Activated CD4-positive, alpha-beta T cell treated with anti-CD3 and anti-CD28 coated beads for 36 hours (primary cell): ENCODE measurements at regions of chr16 and their contacts with region 1.

Region 1: DNA sequence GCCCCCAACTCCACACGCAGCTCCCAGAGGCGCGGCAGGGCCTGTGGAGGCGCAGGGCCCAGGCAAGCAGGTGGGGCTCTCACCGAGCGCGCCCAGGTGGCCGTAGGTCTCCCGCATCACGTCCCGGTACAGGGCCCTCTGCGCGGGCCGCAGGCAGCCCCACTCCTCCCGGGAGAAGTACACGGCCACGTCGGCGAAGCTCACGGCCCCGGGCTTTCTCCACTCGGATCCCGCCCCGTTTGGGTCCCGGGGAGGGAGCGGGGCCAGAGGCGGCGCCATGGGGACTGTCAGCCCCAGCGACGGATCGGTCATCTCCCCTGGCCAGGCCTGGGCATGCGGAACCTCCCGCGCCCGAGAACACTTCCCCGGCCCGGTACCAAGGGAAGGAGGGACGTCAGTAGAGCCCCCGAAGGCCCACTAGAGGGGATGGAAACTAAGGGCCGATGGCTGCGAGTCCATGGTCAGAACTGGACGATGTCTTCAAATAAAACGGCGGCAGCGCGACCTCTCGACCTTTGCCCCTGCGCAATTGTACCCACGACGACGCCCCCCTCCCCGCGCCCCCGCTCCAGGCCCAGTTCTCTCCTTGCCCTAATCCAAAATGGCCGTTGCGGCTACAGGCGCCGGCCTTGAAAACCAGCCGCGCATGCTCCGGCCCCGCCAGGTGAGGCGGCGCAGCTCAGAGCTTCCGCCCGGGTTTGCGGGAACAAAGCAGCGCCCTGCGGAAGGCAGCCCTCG is at the start of gene ZNF747:
- DNase-seq: peak; percentile 95
- ATAC-seq: peak; percentile 80
- H3K4me3 Mint-ChIP-seq: peak within 1 kb of the TSS; percentile 91
- H3K27ac Mint-ChIP-seq: peak within 1 kb of the TSS; percentile 100
- H3K4me1 Mint-ChIP-seq: peaks cover 44% of the 10 kb centered on the region
- H3K27me3 Mint-ChIP-seq: no peaks in the 10 kb centered on the region
- total RNA-seq, gene ZNF747: 6.3 to 8.0 TPM

Region 2: GRCh38 chr16:30417529-30418349 is 116.8 kb before region 1 on chr16:
- CTCF ChIA-PET with region 1: interaction called, 6 read pairs
- POLR2A ChIA-PET with region 1: interaction called, 5 read pairs
- intact Hi-C with region 1: loop called in 1 of 2 experiments (anchors 1 kb)
- DNase-seq: peak; percentile 94
- ATAC-seq: peak; percentile 92
- H3K4me3 Mint-ChIP-seq: peak overlapping the region; percentile 49
- H3K27ac Mint-ChIP-seq: no peak overlapping the region
- H3K4me1 Mint-ChIP-seq: peaks cover 31% of the 10 kb centered on the region
- H3K27me3 Mint-ChIP-seq: no peaks in the 10 kb centered on the region

Region 3: DNA sequence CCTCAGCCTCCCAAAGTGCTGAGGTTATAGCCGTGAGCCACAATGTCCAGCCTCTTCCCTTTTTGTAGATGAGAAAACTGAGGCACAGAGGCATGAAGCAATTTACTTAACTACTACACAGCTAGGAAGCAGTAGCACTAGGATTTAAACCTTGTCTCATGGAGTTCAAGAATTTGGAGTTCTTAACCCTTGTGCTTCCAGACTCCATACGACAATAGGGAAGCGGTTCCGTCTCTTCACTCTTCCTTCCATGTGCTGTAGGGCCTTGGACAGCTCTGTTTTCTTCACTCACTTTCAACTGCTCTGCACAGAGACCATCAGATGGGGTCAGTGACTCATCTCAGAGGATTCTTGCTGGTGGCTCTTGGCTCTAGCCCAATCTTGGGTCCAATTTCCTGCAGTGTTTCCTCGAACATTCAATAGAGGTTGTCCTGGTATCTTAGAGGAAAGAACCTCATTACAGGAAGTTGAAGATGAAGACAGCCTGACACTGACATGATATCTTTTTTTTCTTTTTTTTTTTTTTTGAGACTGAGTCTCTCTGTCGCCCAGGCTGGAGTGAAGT is 42.7 kb before region 1 on chr16:
- CTCF ChIA-PET with region 1: interaction called, 7 read pairs
- POLR2A ChIA-PET with region 1: interaction called, 3 read pairs
- intact Hi-C with region 1: loop called in 1 of 2 experiments (anchors 5 kb)
- DNase-seq: peak; percentile 24
- ATAC-seq: peak; percentile 65
- H3K4me3 Mint-ChIP-seq: no peak overlapping the region
- H3K27ac Mint-ChIP-seq: peak overlapping the region; percentile 66
- H3K4me1 Mint-ChIP-seq: peaks cover 25% of the 10 kb centered on the region
- H3K27me3 Mint-ChIP-seq: no peaks in the 10 kb centered on the region

Region 4: GRCh38 chr16:30571695-30572600 is 37.4 kb after region 1 on chr16 and contains the start of gene ZNF688:
- CTCF ChIA-PET with region 1: interaction called, 12 read pairs
- POLR2A ChIA-PET with region 1: interaction called, 10 read pairs
- intact Hi-C with region 1: loop called (anchors 1 kb)
- DNase-seq: peak; percentile 95
- ATAC-seq: peak; percentile 79
- H3K4me3 Mint-ChIP-seq: peak within 1 kb of the TSS; percentile 87
- H3K27ac Mint-ChIP-seq: peak within 1 kb of the TSS; percentile 93
- H3K4me1 Mint-ChIP-seq: peaks cover 57% of the 10 kb centered on the region
- H3K27me3 Mint-ChIP-seq: no peaks in the 10 kb centered on the region
- total RNA-seq, gene ZNF688: 7.1 to 9.1 TPM

Region 5: GRCh38 chr16:30609926-30610839 is 75.6 kb after region 1 on chr16 and contains the start of gene ZNF689:
- CTCF ChIA-PET with region 1: interaction called, 12 read pairs
- POLR2A ChIA-PET with region 1: interaction called, 6 read pairs
- intact Hi-C with region 1: loop called in 1 of 2 experiments (anchors 1 kb)
- DNase-seq: peak; percentile 96
- ATAC-seq: peak; percentile 88
- H3K4me3 Mint-ChIP-seq: peak within 1 kb of the TSS; percentile 80
- H3K27ac Mint-ChIP-seq: peak within 1 kb of the TSS; percentile 96
- H3K4me1 Mint-ChIP-seq: peaks cover 19% of the 10 kb centered on the region
- H3K27me3 Mint-ChIP-seq: no peaks in the 10 kb centered on the region
- total RNA-seq, gene ZNF689: 9.0 to 10.7 TPM

Region 6: GRCh38 chr16:30650369-30651123 is 116.0 kb after region 1 on chr16 and contains the start of gene PRR14:
- CTCF ChIA-PET with region 1: interaction called, 3 read pairs
- POLR2A ChIA-PET with region 1: interaction called, 7 read pairs
- intact Hi-C with region 1: loop called (anchors 1 to 5 kb)
- DNase-seq: peak; percentile 100
- ATAC-seq: peak; percentile 82
- H3K4me3 Mint-ChIP-seq: peak within 1 kb of the TSS; percentile 95
- H3K27ac Mint-ChIP-seq: peak within 1 kb of the TSS; percentile 97
- H3K4me1 Mint-ChIP-seq: peaks cover 21% of the 10 kb centered on the region
- H3K27me3 Mint-ChIP-seq: no peaks in the 10 kb centered on the region
- total RNA-seq, gene PRR14: 76.8 to 77.8 TPM

Region 7: DNA sequence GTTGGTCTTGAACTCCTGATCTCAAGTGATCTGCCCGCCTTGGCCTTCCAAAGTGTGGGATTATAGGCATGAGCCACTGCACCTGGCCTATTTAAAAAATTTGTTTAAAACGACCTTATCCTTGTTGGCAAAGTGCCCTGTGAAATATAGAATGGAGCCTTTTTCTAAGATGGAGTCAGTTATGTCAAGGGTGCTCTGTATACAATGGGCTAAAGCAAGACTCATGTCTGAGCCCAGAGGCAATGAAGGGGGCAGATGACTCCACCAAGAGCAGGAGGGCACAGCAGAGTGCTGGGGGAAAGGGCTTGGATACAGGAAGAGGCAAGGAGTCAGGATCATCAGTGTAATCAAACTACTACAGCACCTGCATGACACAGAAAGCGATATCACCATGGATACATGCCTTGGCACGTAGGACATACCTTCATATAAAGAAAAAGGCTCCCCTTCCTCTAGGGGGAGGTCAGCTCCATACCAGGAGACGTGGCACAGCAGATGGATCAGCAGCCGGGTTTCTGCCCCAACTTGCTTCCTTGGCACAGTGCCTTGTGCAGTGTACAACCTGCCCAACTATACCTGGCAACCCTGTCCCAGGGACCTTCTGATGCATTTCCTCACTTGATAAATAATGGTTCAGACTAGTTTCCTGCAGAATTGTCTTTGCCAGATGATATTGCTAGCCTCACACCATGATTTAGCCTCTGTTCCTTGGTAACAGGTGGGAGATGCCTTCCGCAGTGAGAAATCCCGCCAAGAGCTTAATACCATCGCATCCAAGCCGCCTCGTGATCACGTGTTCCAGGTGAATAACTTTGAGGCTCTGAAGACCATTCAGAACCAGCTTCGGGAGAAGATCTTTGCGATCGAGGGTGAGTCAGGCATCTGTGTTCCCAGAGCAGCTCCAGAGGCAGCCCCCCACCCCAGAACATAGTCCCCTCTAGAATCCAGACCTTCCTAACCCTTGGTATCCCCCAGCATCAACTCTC is 740.6 kb after region 1 on chr16:
- CTCF ChIA-PET with region 1: no interaction called
- POLR2A ChIA-PET with region 1: no interaction called
- intact Hi-C with region 1: no loop called
- DNase-seq: no peak
- ATAC-seq: no peak
- H3K4me3 Mint-ChIP-seq: no peak overlapping the region
- H3K27ac Mint-ChIP-seq: no peak overlapping the region
- H3K4me1 Mint-ChIP-seq: no peaks in the 10 kb centered on the region
- H3K27me3 Mint-ChIP-seq: peaks cover 4% of the 10 kb centered on the region